A673 (cell line): ENCODE measurements at regions of chr11 and their contacts with region 1.

Region 1: DNA sequence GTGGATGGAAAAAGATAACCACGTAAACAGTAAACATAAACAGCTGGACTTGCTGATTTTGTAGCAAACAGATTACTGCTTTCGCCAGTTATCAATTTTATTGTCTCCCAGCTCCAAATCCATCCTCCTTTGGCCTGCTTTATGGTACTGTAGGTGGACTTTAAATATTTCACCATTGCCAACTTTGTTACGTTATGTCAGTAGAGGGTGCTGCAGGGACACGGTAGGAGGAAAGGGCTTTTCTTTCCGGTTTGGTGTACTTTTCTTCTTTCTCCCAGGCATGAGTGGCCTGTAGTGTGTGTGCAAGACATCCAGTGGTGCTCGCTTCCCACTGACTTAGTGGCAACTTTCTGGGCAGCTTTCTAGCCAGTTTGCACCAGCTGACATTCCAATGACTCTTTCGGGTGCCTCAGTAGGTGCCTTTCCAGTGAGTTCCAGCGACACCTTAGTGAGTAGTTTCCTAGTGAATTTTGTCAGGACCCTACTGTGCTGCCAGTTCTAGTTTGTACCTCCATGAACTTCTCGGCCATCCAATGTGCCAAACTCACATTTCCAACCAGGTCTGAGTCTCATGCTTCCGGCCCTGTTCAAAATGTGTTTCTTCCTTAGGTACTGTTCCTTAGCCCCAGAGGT is 267.6 kb upstream of the TENM4 start:
- DNase-seq: peak; percentile 74
- H3K4me3 ChIP-seq: no peak overlapping the region
- H3K27ac ChIP-seq: no peak overlapping the region
- H3K4me1 ChIP-seq: no peaks in the 10 kb centered on the region
- H3K27me3 ChIP-seq: no peaks in the 10 kb centered on the region
- CTCF ChIP-seq: peak; percentile 64

Region 2: GRCh38 chr11:79809487-79809886 is 101.1 kb after region 1 on chr11:
- CTCF ChIA-PET with region 1: no interaction called
- POLR2A ChIA-PET with region 1: no interaction called
- intact Hi-C with region 1: no loop called
- DNase-seq: no peak
- H3K4me3 ChIP-seq: no peak overlapping the region
- H3K27ac ChIP-seq: no peak overlapping the region
- H3K4me1 ChIP-seq: no peaks in the 10 kb centered on the region
- H3K27me3 ChIP-seq: no peaks in the 10 kb centered on the region
- CTCF ChIP-seq: no peak

Region 3: DNA sequence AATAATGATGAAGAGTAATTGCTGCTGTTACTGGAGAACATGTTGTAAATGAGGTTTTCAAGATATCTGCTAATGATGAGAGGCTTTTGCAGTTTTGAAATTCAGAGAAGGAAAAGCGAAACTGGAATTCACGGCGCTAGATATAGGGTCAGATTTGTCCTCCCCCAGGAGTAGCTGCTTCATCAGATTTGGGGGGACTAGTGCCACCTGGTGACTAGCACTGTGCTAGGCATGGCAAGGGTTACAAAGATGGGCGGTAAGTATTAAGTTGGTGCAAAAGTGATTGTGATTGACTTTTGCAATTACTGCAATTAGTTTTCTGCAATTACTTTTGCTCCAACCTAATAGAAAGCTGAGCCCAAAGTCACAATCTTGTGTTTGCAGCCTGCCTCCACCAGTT is 612.3 kb after region 1 on chr11:
- CTCF ChIA-PET with region 1: no interaction called
- POLR2A ChIA-PET with region 1: no interaction called
- intact Hi-C with region 1: loop called (anchors 2 kb)
- DNase-seq: peak; percentile 38
- H3K4me3 ChIP-seq: peak overlapping the region; percentile 23
- H3K27ac ChIP-seq: no peak overlapping the region
- H3K4me1 ChIP-seq: no peaks in the 10 kb centered on the region
- H3K27me3 ChIP-seq: no peaks in the 10 kb centered on the region
- CTCF ChIP-seq: peak; percentile 61